Astrocyte of the cerebellum (primary cell): ENCODE measurements at regions of chr1 and their contacts with region 1.

Region 1: GRCh38 chr1:220067269-220068204 is 21.2 kb upstream of the EPRS1 start:
- DNase-seq: no peak
- H3K4me3 ChIP-seq: no peak overlapping the region
- CTCF ChIP-seq: no peak

Region 2: DNA sequence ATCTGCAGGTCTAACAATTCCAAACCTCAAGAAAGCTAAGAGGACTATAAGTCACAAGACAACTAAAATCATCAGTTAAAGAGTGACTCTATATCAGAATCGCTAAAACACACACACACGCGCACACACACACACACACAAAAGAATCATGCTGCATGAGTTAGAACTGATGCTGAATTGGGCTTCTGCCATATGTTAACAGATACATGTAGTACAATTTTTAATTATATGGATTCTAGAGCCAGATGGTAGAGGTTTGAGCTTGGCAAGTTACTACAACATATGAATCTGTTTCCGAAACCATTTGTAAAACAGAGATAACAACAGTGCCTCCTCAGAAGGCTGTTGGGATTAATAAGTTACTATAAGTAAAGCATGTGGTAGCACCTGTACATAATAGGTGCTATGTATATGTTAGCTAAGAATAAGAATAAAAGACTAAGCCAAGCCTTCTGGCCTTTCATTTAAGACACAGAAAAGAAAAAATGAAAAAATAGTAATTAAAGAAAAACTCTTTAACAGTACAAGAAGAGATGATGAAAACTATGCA is 39.1 kb before region 1 on chr1:
- in situ Hi-C with region 1: loop called (anchors 5 kb)
- DNase-seq: no peak
- H3K4me3 ChIP-seq: no peak overlapping the region
- CTCF ChIP-seq: no peak

Region 3: DNA sequence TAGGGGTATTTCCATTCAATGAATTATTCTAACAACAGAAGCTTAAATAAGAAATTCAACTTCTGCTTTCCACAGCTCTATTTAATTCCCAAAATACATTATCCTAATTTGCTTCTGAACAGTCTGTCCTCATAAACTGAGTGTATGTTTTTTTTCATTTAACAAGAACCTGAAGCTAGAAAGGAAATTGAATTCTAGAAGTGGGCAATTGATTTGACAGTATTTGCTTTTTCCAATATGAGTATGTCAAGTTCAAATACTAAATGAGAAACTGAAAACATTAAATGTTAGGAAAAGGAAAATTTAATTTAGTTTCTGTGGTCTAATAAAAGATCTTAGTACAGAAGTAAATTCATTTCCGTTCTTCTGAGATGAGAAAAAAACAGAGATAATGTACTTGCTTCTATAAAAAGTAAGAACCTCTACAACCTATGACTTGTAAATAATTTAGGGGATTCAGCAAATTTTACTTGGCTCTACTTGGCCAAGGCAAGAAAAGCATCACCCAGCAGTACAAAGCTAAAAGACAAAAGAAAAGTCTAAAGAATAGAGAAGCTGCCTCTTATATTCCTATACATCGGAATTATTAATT is 173.6 kb after region 1 on chr1:
- in situ Hi-C with region 1: no loop called
- DNase-seq: no peak
- H3K4me3 ChIP-seq: no peak overlapping the region
- CTCF ChIP-seq: no peak